Mammary epithelial cell (primary cell): ENCODE measurements at regions of chr1 and their contacts with region 1.

Region 1: GRCh38 chr1:18972531-18972930 is 16.1 kb upstream of the IFFO2 start:
- DNase-seq: peak; percentile 52
- H3K4me3 ChIP-seq: no peak overlapping the region
- H3K27ac ChIP-seq: no peak overlapping the region
- H3K4me1 ChIP-seq: peaks cover 4% of the 10 kb centered on the region
- H3K27me3 ChIP-seq: no peaks in the 10 kb centered on the region
- CTCF ChIP-seq: peak; percentile 18 to 51

Region 2: GRCh38 chr1:18883636-18884418 is 88.7 kb before region 1 on chr1:
- CTCF ChIA-PET with region 1: no interaction called
- dilution Hi-C with region 1: no loop called
- in situ Hi-C with region 1: no loop called
- intact Hi-C with region 1: loop called (anchors 1 kb)
- DNase-seq: peak; percentile 47
- H3K4me3 ChIP-seq: no peak overlapping the region
- H3K27ac ChIP-seq: no peak overlapping the region
- H3K4me1 ChIP-seq: peaks cover 29% of the 10 kb centered on the region
- H3K27me3 ChIP-seq: no peaks in the 10 kb centered on the region
- CTCF ChIP-seq: peak; percentile 93 to 95